K562 (cell line): ENCODE measurements at regions of chr1 and their contacts with region 1.

Region 1: DNA sequence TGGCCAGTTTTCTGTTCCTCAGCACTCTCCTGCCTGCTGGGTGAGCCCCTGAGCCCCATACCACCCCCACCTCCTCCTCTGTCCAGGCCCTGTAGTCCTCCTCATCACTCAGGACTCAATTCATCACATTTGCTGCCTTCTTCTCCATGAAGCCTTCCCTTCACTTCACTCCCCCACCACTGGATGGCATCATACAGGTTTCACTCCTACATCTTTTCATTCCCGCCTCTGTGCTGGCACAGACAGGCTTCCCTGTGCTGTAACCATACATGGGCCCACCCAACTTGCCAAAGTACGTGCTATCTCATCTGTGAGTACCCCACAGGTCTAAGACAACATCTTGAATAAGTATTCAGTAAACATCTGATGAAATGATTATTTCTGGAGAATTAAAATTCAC is 56.9 kb downstream of the SLC45A1 start:
- DNase-seq: peak; percentile 54 to 62 (median 58)
- ATAC-seq: peak; percentile 83
- H3K4me3 ChIP-seq: no peak overlapping the region
- H3K27ac ChIP-seq: no peak overlapping the region
- H3K4me1 ChIP-seq: no peaks in the 10 kb centered on the region
- H3K27me3 ChIP-seq: no peaks in the 10 kb centered on the region
- CTCF ChIP-seq: peak; percentile 54 to 66 (median 66)
- EP300 ChIP-seq: no peak
- POLR2A ChIP-seq: no peak
- RAD21 ChIP-seq: peak; percentile 39 to 68; a peak in 3 of 4 replicates

Region 2: GRCh38 chr1:8026153-8026975 is 348.4 kb before region 1 on chr1 and contains the start of gene ERRFI1:
- CTCF ChIA-PET with region 1: no interaction called
- POLR2A ChIA-PET with region 1: no interaction called
- in situ Hi-C with region 1: no loop called
- intact Hi-C with region 1: no loop called
- DNase-seq: peak; percentile 96 to 100 (median 100)
- ATAC-seq: peak; percentile 98
- H3K4me3 ChIP-seq: peak within 1 kb of the TSS; percentile 43
- H3K27ac ChIP-seq: no peak within 1 kb of the TSS
- H3K4me1 ChIP-seq: peaks cover 5 to 16% of the 10 kb centered on the region in 2 experiments; a peak in 3 of 5 replicates
- H3K27me3 ChIP-seq: peaks cover 41 to 45% of the 10 kb centered on the region in 2 experiments
- CTCF ChIP-seq: peak in 1 of 3 experiments; percentile 21; a peak in 1 of 6 replicates
- EP300 ChIP-seq: no peak
- POLR2A ChIP-seq: no peak; the same call in 1 of the 2 replicates
- RAD21 ChIP-seq: peak in 1 of 2 experiments; percentile 28; a peak in 2 of 4 replicates
- polyA plus RNA-seq, gene ERRFI1: 0.67 to 0.72 TPM

Region 3: DNA sequence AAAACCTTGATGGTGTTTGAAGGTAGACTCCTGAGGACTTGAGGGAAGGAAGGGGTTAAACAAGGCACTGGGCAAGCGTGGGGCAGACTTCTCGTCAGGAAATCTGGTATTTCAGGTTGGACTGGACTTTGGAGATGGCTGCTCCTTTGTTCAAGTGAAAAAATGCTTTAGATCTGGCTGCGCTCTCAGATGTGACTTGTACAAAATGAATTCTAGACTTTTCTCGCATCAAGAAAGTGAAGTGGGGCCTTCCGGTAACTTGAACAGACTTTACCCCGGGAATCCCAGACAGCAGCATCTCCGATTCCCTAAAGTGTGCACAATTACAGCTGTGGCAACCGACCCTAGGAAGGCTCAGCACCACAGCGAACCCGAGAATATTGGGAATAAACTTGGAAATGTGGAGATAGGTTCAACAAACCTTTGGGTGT is 304.4 kb before region 1 on chr1:
- CTCF ChIA-PET with region 1: no interaction called
- POLR2A ChIA-PET with region 1: no interaction called
- in situ Hi-C with region 1: no loop called
- intact Hi-C with region 1: no loop called
- DNase-seq: no peak
- ATAC-seq: no peak
- H3K4me3 ChIP-seq: no peak overlapping the region
- H3K27ac ChIP-seq: no peak overlapping the region
- H3K4me1 ChIP-seq: no peaks in the 10 kb centered on the region
- H3K27me3 ChIP-seq: peaks cover 13 to 18% of the 10 kb centered on the region in 2 experiments
- CTCF ChIP-seq: no peak
- EP300 ChIP-seq: no peak
- POLR2A ChIP-seq: no peak
- RAD21 ChIP-seq: no peak

Region 4: GRCh38 chr1:8448911-8449661 is 74.3 kb after region 1 on chr1:
- CTCF ChIA-PET with region 1: no interaction called
- POLR2A ChIA-PET with region 1: no interaction called
- in situ Hi-C with region 1: no loop called
- intact Hi-C with region 1: loop called (anchors 10 kb)
- DNase-seq: no peak
- ATAC-seq: no peak
- H3K4me3 ChIP-seq: no peak overlapping the region
- H3K27ac ChIP-seq: no peak overlapping the region
- H3K4me1 ChIP-seq: no peaks in the 10 kb centered on the region
- H3K27me3 ChIP-seq: no peaks in the 10 kb centered on the region
- CTCF ChIP-seq: no peak
- EP300 ChIP-seq: no peak
- POLR2A ChIP-seq: no peak
- RAD21 ChIP-seq: no peak

Region 5: DNA sequence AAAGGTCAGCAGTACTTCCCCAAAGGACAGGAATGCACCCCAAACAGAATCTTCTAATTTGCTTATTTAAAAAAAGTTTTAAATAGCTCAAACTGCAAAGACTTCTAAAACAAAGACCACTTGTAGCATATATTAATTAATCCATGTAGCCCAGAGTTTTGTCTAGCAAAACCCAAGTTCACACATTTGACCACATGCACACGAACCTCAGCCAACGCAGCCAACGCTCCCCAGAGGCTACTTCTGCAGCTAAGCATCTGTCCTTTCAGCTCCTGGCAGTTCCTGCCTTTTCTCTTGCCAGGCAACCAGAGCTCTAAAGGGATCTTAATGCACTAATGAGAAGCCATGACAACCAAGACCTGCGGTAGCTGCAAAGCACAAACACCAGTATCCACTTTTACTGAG is 353.0 kb after region 1 on chr1:
- CTCF ChIA-PET with region 1: interaction called, 3 read pairs
- POLR2A ChIA-PET with region 1: no interaction called
- in situ Hi-C with region 1: no loop called
- intact Hi-C with region 1: loop called (anchors 10 kb)
- DNase-seq: no peak
- ATAC-seq: no peak
- H3K4me3 ChIP-seq: no peak overlapping the region
- H3K27ac ChIP-seq: no peak overlapping the region
- H3K4me1 ChIP-seq: peaks cover 4 to 5% of the 10 kb centered on the region in 2 experiments; a peak in 3 of 5 replicates
- H3K27me3 ChIP-seq: no peaks in the 10 kb centered on the region
- CTCF ChIP-seq: no peak
- EP300 ChIP-seq: no peak
- POLR2A ChIP-seq: no peak
- RAD21 ChIP-seq: no peak